ENCODE measurements at regions of chr22 and their contacts with region 1.

Region 1: GRCh38 chr22:25057013-25057881 is 104.7 kb downstream of the KIAA1671 start:
- DNase-seq: peak; percentile 65
- H3K4me3 Mint-ChIP-seq: no peak overlapping the region
- H3K27ac Mint-ChIP-seq: peak overlapping the region; percentile 44
- H3K4me1 Mint-ChIP-seq: peaks cover 55% of the 10 kb centered on the region
- H3K27me3 Mint-ChIP-seq: no peaks in the 10 kb centered on the region

Region 2: DNA sequence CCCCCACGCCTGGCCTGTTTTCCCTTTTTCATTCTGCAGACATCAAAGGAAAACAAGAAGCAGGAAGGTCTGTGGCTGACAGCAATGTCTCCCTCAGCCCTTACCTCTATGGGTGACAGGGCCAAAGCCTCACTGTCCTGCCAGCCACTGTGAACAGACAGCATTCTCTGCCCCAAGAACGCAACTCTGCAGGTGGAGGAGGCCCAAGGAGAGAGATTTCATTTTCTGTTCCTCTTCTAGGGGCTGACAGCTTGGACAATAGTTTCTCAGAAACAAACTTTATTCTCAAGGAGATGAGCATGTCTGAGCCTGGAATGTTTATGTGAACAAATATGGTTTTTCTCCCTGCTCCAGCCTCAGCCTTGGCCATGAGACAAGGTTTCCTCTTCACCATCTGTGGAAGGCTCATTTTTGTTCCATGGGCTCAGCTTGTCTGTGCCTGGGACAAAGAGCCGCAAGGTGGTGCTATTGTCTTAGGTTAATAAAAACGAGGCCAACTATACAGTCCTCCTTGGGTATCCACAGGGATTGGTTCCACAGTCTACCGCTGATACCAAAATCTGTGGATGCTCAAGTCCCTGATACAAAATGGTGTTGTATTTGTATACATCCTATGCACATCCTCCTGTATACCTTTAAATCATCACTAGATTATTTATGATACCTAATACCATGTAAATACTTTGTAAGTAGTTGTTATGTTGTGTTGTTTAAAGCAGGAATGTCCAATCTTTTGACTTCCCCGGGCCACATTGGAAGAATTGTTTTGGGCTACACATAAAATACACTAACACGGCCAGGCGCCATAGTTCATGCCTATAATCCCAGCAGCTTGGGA is 288.5 kb before region 1 on chr22:
- intact Hi-C with region 1: loop called (anchors 2 kb)
- DNase-seq: peak; percentile 13
- H3K4me3 Mint-ChIP-seq: no peak overlapping the region
- H3K27ac Mint-ChIP-seq: no peak overlapping the region
- H3K4me1 Mint-ChIP-seq: no peaks in the 10 kb centered on the region
- H3K27me3 Mint-ChIP-seq: peaks cover 4% of the 10 kb centered on the region

Region 3: DNA sequence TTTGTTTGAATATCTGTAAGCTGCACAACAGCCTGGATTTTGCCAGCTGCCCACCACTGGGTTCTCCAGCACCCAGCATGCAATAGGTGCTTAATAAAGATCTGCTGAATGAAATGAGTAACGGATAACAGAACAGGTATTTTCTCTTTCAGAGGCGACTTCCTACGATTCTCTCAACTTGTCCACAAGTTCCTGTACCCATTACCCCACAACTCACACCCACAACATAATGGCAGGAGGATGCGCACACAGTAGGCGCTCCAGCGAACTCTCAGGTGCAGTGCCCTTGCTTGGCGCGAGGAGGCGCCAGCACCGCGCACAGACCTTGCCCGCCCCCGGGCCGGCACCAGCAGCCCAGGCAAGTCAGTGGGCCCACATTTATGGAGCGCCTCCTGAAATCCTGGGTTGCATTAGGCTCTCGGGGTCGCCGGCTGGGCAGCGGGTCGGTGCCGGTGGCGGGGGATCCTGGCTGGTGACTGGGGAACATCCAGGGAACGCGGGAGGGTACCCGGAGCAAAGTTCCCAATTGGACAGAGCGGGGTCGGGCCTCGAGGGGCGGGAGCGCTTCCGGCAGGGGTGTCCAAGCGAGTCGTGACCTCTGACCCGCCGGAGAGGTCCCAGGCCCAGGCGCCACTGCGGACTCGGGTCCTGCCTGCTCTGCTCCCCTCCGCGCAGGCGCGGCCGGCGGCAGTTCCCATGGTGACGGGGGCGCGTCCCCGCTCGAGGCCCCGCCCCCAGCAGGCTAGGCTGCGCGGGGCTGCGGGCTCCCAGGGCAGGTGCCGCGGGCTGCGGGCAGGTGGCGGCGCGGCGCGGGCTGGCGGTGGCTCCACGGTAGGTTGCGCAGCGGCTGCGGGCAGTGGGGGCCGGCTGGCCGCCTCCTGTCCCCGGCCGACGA is 105.1 kb before region 1 on chr22 and contains the start of gene KIAA1671:
- intact Hi-C with region 1: loop called (anchors 2 kb)
- DNase-seq: peak; percentile 88
- H3K4me3 Mint-ChIP-seq: peak within 1 kb of the TSS; percentile 83
- H3K27ac Mint-ChIP-seq: peak within 1 kb of the TSS; percentile 15
- H3K4me1 Mint-ChIP-seq: peaks cover 31% of the 10 kb centered on the region
- H3K27me3 Mint-ChIP-seq: peaks cover 49% of the 10 kb centered on the region
- total RNA-seq, gene KIAA1671: 16.5 and 17.6 TPM in 2 replicates

Region 4: GRCh38 chr22:25067851-25068421 is 10.7 kb after region 1 on chr22:
- intact Hi-C with region 1: loop called (anchors 1 kb)
- DNase-seq: peak; percentile 82
- H3K4me3 Mint-ChIP-seq: peak overlapping the region; percentile 94
- H3K27ac Mint-ChIP-seq: peak overlapping the region; percentile 99
- H3K4me1 Mint-ChIP-seq: peaks cover 83% of the 10 kb centered on the region
- H3K27me3 Mint-ChIP-seq: no peaks in the 10 kb centered on the region

Region 5: DNA sequence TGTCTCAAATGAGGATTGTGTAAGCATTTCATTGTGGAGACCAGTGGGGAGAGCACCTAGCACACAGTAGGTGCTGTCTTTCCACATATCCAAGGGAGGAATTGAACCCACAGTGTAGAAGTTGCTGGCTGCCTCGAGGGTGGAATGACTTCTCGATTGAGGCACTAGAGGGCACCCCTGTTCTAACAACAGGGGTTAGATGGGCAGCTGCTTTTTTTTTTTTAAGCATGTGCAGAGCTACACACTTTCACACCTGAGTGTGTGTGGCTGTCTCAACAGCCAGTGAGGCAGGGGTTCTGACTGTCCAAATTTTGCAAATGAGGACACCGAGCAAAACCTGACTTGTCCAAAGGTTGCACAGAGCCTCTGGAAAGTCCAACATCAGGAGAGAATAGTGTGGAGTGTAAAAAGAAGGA is 24.2 kb after region 1 on chr22:
- intact Hi-C with region 1: loop called (anchors 1 kb)
- DNase-seq: peak; percentile 33
- H3K4me3 Mint-ChIP-seq: no peak overlapping the region
- H3K27ac Mint-ChIP-seq: peak overlapping the region; percentile 72
- H3K4me1 Mint-ChIP-seq: peaks cover 83% of the 10 kb centered on the region
- H3K27me3 Mint-ChIP-seq: no peaks in the 10 kb centered on the region

Region 6: DNA sequence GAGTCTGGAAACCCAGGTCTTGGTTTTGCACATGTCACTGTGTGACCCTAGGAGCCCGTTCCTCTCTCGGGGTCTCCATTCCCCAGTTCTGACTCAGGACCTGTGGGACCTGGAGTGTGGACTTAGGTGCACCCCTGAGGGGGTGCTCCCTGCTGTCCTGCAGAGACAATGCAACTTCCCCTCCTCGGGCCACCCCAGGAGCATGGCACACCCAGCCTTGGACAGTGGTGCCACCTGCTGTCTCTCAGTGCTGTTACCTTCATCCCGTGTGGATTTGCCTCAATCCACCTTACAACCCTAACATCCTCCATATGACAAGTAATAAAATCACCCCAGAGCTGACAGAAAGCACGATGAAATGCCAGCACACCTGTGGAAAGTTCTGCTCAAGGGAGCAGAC is 114.9 kb after region 1 on chr22:
- intact Hi-C with region 1: loop called (anchors 1 kb)
- DNase-seq: no peak
- H3K4me3 Mint-ChIP-seq: no peak overlapping the region
- H3K27ac Mint-ChIP-seq: no peak overlapping the region
- H3K4me1 Mint-ChIP-seq: peaks cover 5% of the 10 kb centered on the region
- H3K27me3 Mint-ChIP-seq: no peaks in the 10 kb centered on the region

Region 7: DNA sequence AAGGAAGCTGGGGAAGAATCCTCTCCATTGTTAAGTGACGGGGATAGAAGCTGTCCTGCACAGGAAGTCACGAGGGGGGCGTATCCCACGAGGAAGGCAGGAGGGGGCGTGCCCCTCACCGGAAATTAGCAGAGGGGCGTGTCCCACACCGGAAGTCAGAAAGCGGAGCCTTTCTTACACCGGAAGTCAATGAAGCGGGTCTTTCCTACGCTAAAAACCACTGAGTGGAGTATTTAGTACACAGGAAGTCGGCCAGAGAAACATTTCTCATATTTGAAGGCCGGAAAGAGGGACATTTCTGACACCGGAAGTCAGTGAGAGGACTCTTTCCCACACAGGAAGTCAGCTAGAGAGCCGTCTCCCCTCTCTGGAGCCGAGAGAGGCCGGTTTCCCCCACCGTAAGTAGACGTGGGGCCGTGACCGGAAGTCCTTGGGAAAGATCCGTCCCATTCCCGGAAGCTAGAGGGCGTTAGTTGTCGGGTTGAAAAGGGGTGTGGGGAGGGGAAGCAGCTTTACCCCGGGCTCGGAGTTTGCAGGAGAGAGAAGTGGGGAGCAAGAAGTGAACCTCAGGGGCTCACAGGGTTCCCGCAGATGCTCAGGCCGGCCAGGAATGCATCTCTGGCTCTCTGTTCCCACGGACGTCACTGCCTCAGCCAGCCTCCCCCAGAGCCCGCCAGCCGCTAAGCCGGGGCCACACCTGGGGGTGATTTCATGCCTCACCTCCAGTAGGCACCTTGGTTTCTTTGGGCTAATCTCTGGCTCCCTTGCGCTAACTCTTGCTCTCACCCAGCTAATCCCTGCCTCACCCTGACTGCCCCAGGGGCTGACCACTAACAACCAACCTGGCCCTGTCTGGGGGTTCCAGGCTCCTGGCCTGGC is 1615.6 kb after region 1 on chr22:
- intact Hi-C with region 1: loop called (anchors 2 kb)
- DNase-seq: peak; percentile 91
- H3K4me3 Mint-ChIP-seq: peak overlapping the region; percentile 95
- H3K27ac Mint-ChIP-seq: peak overlapping the region; percentile 98
- H3K4me1 Mint-ChIP-seq: peaks cover 72% of the 10 kb centered on the region
- H3K27me3 Mint-ChIP-seq: no peaks in the 10 kb centered on the region

Measured in activated T-helper 1 cell treated with anti-CD3 and anti-CD28 coated beads, Interleukin-12 subunit alpha, Interleukin-12 subunit beta, Interleukin-2, Interleukin-4 antibody, amounts not matched to agents 30 ng/mL and 10 ng/mL and 1 ng/mL, durations not matched to agents 14 hours and 24 hours and 36 hours (primary cell).